ENCODE measurements at regions of chr7 and their contacts with region 1.

Region 1: GRCh38 chr7:5494683-5495561 is 71.3 kb upstream of the TNRC18 start:
- DNase-seq: peak in 1 of 2 donors; percentile 83
- ATAC-seq: peak; percentile 93

Region 2: DNA sequence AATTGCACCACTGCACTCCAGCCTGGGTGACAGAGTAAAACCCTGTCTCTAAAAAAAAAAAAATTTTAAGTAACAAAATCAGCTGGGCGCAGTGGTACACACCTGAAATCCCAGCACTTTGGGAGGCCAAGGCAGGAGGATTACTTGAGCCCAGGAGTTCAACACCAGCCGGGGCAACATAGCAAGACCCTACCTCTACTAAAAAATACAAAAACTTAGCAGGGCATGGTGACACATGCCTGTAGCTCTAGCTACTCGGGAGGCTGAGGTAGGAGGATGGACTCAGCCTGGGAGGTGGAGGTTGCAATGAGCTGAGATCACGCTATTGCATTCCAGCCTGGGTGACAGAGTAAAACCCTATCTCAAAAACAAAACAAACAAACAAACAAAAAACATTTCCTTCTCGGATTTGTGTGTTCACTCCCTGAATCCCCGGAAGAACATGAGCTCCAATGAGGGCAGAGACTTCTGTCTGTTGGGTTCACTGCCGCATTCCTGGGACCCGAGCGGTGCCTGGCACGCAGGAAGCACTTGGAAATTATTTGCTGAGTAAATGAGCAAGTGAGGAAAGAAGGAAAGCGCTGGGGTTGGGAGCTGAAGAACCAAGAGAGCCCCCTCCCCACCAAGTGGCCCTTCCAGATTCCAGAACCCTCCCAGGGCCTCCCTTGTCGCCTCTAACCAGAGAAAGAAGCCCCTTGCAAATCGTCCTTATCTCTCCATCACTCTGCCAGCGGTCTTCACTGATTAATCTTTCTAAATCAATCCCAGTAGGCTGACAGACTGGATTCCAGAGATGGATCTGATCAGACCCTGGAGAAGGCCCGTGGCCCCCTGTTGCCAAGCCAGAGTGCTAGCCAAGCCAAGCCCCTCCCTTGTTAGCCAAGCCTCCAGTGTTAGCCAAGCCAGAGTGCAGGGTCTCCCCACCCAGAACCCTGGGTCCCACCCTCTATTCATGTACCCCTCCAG is 77.5 kb before region 1 on chr7:
- intact Hi-C with region 1: no loop called
- DNase-seq: peak in 1 of 2 donors; percentile 57
- ATAC-seq: no peak

Region 3: GRCh38 chr7:5665094-5666025 is 170.4 kb after region 1 on chr7:
- intact Hi-C with region 1: loop called in 1 of 2 experiments (anchors 10 kb)
- DNase-seq: peak; percentile 51 to 66
- ATAC-seq: peak; percentile 91

Region 4: DNA sequence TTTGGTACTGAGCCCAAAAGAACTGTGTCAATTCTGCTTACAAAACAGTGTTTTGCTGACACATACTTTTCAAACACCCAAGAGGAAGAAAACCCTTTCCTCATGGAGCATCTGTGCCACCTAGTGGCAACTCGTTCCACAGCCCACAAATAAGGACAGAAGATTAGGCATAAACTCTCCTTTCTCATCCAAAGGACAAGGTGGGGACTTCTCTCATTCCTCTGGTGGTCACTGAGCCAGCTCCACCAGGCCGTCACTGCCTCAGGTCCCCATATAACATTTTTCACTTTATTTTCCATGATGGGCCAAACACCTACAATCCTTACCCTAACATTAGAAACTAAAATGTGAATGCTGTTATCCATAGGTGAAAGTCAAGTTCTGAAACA is 209.6 kb after region 1 on chr7:
- intact Hi-C with region 1: loop called in 1 of 2 experiments (anchors 10 kb)
- DNase-seq: peak; percentile 59 to 81
- ATAC-seq: peak; percentile 86

Region 5: DNA sequence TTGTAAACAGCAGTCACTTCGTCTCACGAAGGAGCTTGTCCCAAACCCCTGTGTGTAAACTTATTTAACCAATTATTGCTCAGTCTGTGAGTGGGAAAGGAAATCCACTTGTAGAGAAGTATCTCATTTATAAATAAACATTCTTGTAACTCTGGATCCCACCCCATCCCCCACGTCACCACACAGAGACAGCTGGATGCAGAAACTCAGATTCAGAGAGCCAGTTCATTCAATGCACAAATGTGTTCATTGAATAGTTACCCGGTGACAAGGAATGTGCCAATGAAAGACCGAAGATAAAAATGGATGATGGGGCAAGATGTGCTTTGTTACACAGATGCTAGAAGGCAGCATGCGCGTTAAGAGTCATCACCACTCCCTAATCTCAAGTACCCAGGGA is 377.4 kb after region 1 on chr7:
- intact Hi-C with region 1: no loop called
- DNase-seq: no peak
- ATAC-seq: no peak